Heart right ventricle (tissue), 16 donors: ENCODE measurements at regions of chr9 and their contacts with region 1.

Region 1: GRCh38 chr9:28051559-28052503 is 478.6 kb upstream of the C9orf72 start:
- DNase-seq: no peak
- ATAC-seq: no peak
- H3K4me3 ChIP-seq: no peak overlapping the region
- H3K27ac ChIP-seq: no peak overlapping the region
- H3K4me1 ChIP-seq: no peaks in the 10 kb centered on the region
- H3K27me3 ChIP-seq: no peaks in the 10 kb centered on the region
- CTCF ChIP-seq: no peak

Region 2: GRCh38 chr9:26936300-26936948 is 1115.4 kb before region 1 on chr9:
- intact Hi-C with region 1: loop called in 1 of 10 experiments (anchors 10 kb)
- DNase-seq: no peak
- ATAC-seq: no peak
- H3K4me3 ChIP-seq: no peak overlapping the region
- H3K27ac ChIP-seq: no peak overlapping the region
- H3K4me1 ChIP-seq: peaks cover 0 to 27% (median 4%) of the 10 kb centered on the region in 9 donors
- H3K27me3 ChIP-seq: no peaks in the 10 kb centered on the region
- CTCF ChIP-seq: no peak

Region 3: DNA sequence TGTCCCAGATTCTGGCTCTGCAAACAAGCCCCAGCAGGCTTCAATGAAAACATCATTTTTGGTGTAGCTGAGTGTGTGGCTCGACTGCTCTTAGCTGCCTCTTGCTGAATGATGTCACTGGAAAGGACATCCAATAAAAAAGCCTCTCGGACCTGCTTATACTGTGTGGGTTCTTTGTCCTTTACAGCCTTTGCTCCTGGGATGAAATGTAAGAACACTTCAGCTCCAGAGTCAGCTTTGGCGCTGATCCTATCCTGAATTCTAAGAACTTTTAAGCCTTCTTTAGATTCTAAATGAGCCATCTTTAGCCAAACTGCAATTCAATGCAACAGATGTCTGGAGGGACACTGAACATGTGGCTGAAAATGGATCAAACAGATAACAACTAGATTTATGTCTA is 73.9 kb before region 1 on chr9:
- intact Hi-C with region 1: loop called in 1 of 10 experiments (anchors 10 kb)
- DNase-seq: no peak
- ATAC-seq: no peak
- H3K4me3 ChIP-seq: no peak overlapping the region
- H3K27ac ChIP-seq: no peak overlapping the region
- H3K4me1 ChIP-seq: no peaks in the 10 kb centered on the region
- H3K27me3 ChIP-seq: no peaks in the 10 kb centered on the region
- CTCF ChIP-seq: no peak

Region 4: DNA sequence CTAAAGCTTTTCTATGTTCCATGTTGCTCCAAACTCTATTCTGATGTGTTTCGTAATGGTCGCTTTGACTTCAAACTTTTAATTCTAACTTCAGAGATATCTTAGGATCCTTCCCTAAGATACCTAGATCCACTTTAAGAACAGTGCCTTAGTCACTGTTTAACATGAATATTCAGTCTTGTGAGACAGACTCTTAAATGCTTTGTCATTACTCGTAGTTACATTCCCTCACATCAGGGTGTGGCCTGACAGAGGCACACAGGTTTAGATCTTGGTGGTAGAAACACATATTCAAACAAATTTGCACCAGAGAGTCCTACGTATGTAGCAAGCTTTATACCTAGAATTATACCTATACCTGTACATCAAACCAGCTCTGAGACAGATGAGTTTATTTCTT is 208.5 kb after region 1 on chr9:
- intact Hi-C with region 1: no loop called
- DNase-seq: no peak
- ATAC-seq: no peak
- H3K4me3 ChIP-seq: no peak overlapping the region
- H3K27ac ChIP-seq: no peak overlapping the region
- H3K4me1 ChIP-seq: no peaks in the 10 kb centered on the region
- H3K27me3 ChIP-seq: no peaks in the 10 kb centered on the region
- CTCF ChIP-seq: no peak